ENCODE measurements at regions of chr5 and their contacts with region 1.

Region 1: GRCh38 chr5:97162045-97162444 is 19.6 kb upstream of the LIX1 start:
- DNase-seq: peak; percentile 81

Region 2: GRCh38 chr5:96752341-96753016 is 409.6 kb before region 1 on chr5:
- in situ Hi-C with region 1: loop called (anchors 25 kb)
- DNase-seq: peak; percentile 76

Region 3: GRCh38 chr5:96876292-96876850 is 285.7 kb before region 1 on chr5 and contains the start of gene ERAP2:
- in situ Hi-C with region 1: loop called (anchors 25 kb)
- DNase-seq: peak; percentile 41
- total RNA-seq, gene ERAP2: 2.4 and 3.5 TPM in 2 replicates

Region 4: GRCh38 chr5:97044052-97044451 is 118.0 kb before region 1 on chr5:
- in situ Hi-C with region 1: no loop called
- DNase-seq: peak; percentile 68

Measured in SK-MEL-5 (cell line).